Activated CD4-positive, alpha-beta memory T cell treated with anti-CD3 and anti-CD28 coated beads, Interleukin-2, amount 10 ng/mL, durations not matched to agents 7 days and 5 days (primary cell): ENCODE measurements at regions of chr11 and their contacts with region 1.

Region 1: DNA sequence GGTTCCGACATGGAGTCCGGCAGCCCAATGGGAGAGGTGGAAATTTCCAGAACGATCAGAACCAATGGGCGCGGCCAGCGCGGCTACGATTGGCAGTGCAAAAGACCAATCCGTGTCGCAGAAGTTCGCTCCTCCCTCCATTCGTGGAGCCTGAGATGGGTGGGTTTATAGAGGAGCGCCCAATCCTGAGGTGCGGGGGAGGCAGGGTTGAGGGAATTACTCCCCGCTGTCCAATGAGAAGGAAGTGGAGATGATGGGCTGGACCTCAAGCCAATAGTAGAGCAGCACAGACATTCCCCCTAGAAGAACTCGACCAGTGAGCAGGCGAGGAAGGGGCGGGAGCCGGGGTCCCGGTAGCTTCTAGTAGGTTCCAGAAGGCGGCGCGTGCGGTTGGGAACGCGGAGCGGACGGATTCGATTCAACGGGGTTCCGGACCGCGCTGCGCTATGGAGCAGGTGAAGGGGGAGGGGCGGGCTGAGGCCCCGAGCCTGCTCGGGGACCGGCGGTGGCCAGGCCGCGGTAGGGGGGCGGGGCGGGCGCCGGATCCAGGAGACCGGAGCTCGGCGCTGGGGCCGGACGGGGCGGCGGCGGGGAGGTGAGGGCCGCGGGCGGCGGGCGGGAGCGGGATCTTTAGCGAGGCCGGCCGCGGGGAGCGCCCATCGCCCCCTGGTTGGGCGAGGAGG is at the start of gene STIP1:
- DNase-seq: peak; percentile 99
- H3K4me3 Mint-ChIP-seq: no peak within 1 kb of the TSS
- H3K27ac Mint-ChIP-seq: peak within 1 kb of the TSS; percentile 99
- H3K4me1 Mint-ChIP-seq: peaks cover 56% of the 10 kb centered on the region
- H3K27me3 Mint-ChIP-seq: no peaks in the 10 kb centered on the region
- total RNA-seq, gene STIP1: 258 to 269 TPM

Region 2: DNA sequence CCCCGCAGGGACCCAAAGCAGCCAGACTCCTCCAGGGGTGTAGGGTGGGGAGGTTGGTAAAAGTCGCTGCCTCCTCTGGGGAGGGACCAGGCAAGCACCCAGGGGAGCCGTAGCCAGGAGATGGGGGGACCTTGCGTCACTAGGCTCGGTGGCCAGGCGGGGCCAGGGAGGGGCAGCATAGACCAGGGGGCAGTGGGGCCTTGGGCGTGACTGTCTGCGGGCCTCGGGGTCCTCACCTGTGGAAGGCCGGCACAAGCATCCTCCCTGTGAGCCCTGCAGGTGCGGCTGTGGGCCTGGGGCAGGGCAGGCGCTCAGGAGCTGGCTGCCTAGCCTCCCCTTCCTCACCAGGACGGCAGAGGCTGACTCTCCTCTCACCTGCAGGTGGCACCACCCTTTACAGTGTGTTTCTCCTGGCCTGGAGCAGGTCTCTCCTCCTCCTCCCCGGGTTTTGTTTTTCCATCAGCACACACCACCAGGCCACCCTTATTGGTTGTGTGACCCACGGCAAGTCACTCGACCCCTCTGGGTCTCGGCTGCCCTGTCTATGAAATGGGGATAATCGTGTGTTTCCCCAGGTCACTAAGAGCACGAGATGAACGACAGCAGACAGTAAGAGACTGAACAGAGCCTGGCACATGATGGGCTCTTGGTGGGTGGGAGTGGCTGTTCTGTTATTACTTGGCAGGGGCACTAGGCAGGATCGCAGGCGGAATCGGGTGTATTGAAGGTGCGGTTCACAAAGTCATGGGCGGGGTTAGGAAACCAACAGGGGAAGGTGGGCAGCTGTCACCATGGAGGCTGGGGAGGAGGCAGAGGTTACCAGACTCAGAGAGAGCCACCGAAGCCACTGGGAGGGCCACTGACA is 97.6 kb before region 1 on chr11:
- CTCF ChIA-PET with region 1: no interaction called
- POLR2A ChIA-PET with region 1: no interaction called
- DNase-seq: peak; percentile 17
- H3K4me3 Mint-ChIP-seq: no peak overlapping the region
- H3K27ac Mint-ChIP-seq: no peak overlapping the region
- H3K4me1 Mint-ChIP-seq: peaks cover 17% of the 10 kb centered on the region
- H3K27me3 Mint-ChIP-seq: no peaks in the 10 kb centered on the region

Region 3: GRCh38 chr11:64100360-64100759 is 85.6 kb before region 1 on chr11:
- CTCF ChIA-PET with region 1: no interaction called
- POLR2A ChIA-PET with region 1: no interaction called
- DNase-seq: no peak
- H3K4me3 Mint-ChIP-seq: no peak overlapping the region
- H3K27ac Mint-ChIP-seq: no peak overlapping the region
- H3K4me1 Mint-ChIP-seq: no peaks in the 10 kb centered on the region
- H3K27me3 Mint-ChIP-seq: no peaks in the 10 kb centered on the region

Region 4: DNA sequence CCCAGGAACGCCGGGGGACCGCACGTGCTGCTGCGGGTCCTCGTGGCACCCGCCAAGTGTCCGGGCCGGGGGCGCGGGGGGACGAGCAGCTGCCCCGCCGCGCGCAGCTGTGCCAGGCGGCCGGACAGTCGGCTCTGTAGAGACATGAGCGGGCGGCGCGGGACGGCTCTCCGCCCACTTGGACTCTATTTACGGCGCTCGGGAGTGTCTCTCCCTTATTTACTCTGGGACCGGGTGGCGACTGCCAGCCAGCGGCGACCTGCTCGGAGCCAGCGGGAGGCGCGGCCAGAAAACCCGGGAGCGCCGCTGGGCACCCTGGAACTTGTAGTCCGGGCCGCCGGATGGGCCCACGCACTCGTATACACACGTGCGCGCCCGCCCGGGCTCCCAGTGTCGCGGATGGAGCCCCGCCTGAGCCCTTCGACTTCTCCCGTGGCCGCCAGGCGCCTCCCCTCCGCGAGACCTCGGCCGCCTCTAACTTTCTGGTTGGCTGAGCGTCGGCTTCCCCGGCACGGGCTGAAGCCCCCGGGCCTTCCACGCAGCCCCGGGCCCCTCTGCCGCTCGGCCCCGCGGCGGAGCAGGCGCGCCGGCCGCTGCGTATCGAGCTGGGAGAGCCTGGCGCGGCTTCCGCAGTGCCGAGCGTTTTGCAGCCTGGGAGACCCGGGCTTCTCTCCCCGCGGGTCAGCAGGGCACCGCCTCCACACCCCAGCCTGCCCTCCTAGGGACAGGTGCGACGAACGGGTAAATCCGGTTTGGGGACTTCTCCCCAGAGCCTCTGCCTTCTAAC is 19.9 kb before region 1 on chr11 and contains the start of gene MACROD1:
- CTCF ChIA-PET with region 1: interaction called, 4 read pairs
- POLR2A ChIA-PET with region 1: interaction called, 51 read pairs
- DNase-seq: peak; percentile 84
- H3K4me3 Mint-ChIP-seq: peak within 1 kb of the TSS; percentile 84
- H3K27ac Mint-ChIP-seq: no peak within 1 kb of the TSS
- H3K4me1 Mint-ChIP-seq: peaks cover 10% of the 10 kb centered on the region
- H3K27me3 Mint-ChIP-seq: no peaks in the 10 kb centered on the region
- total RNA-seq, gene MACROD1: 8.8 to 9.1 TPM

Region 5: DNA sequence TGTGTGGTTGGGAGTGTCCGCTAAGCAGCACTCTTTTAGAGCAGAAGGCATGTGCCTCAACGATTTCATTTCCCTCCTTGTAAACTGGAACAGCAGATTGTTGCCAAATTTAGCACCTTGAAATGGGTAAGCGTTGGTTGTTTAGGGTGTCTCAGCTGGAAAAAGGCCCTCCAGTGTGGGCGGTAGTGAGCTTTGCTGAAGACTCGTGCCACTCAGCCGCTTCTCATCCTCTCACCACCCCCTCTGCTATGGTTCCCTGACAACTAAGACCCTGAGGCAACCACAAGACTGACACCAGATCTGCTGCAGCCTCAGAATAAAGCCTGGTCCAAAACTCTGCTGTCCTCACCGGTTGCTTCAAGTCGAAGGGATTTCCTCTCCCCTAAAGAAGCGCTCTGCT is 10.7 kb after region 1 on chr11:
- CTCF ChIA-PET with region 1: interaction called, 7 read pairs
- POLR2A ChIA-PET with region 1: interaction called, 36 read pairs
- DNase-seq: no peak
- H3K4me3 Mint-ChIP-seq: no peak overlapping the region
- H3K27ac Mint-ChIP-seq: peak overlapping the region; percentile 32
- H3K4me1 Mint-ChIP-seq: peaks cover 24% of the 10 kb centered on the region
- H3K27me3 Mint-ChIP-seq: no peaks in the 10 kb centered on the region

Region 6: DNA sequence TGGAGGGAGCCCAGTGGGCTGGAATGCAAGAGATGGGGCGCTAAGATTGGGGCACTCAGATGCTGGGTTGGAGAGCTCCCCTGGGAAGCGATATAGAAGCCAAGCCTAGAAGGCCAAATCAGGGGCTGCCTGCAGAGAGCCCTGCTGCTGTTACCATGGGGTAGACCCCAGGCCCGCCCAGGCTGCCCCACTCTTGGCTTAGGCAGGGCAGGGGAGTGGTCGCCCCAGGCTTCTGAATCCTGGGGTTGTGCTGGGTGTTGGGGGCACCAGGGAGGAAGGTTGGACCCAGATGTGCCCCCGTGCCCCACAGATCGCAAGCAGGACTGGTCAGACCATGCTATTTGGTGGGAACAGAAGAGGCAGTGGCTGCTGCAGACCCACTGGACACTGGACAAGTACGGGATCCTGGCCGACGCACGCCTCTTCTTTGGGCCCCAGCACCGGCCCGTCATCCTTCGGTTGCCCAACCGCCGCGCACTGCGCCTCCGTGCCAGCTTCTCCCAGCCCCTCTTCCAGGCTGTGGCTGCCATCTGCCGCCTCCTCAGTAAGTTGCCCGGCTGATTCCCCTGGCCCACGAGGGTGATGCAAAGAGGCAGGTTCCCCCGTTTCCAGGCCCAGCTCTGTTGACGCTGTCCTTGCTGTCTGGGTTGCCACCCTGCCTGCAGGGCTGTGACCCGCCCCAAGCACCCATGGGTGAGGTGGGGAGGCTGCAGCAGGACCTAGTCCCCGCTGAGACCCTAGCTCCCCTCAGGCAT is 24.5 kb after region 1 on chr11:
- CTCF ChIA-PET with region 1: interaction called, 71 read pairs
- POLR2A ChIA-PET with region 1: interaction called, 272 read pairs
- DNase-seq: no peak
- H3K4me3 Mint-ChIP-seq: no peak overlapping the region
- H3K27ac Mint-ChIP-seq: no peak overlapping the region
- H3K4me1 Mint-ChIP-seq: peaks cover 49% of the 10 kb centered on the region
- H3K27me3 Mint-ChIP-seq: no peaks in the 10 kb centered on the region

Region 7: DNA sequence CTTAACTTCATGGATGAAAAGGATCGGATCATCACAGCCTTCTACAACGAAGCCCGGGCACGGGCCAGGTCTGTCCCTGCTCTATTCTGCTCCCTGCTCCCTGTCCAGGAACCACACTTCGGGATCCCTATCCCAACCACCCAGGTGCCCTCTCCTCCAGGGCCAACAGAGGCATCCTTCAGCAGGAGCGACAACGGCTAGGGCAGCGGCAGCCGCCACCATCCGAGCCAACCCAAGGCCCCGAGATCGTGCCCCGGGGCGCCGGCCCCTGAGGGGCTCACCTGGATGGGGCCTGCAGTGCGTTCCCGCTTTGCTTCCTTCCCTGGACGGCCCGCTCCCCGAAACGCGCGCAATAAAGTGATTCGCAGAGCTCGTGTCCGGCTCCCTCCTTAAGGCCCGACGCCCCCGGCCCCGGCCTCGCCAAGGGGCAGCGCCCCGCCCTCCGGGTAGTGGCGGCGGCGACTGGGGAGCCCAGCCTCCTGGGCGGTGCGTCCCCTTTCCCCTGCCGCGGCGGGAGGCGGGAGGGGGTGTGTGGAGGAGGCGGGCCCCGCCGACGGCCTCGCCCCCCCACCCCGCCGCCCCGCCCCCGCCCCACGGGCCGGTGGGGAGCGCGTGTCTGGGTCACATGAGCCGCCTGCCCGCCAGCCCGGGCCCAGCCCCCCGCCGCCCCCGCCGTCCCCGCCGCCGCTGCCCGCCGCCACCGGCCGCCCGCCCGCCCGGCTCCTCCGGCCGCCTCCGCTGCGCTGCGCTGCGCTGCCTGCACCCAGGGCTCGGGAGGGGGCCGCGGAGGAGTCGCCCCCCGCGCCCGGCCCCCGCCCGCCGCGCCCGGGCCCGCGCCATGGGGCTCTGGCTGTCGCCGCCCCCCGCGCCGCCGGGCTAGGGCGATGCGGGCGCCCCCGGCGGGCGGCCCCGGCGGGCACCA is 48.2 kb after region 1 on chr11 and contains the start of gene VEGFB:
- CTCF ChIA-PET with region 1: no interaction called
- POLR2A ChIA-PET with region 1: interaction called, 10 read pairs
- DNase-seq: peak; percentile 79
- H3K4me3 Mint-ChIP-seq: peak within 1 kb of the TSS; percentile 83
- H3K27ac Mint-ChIP-seq: peak within 1 kb of the TSS; percentile 26
- H3K4me1 Mint-ChIP-seq: peaks cover 45% of the 10 kb centered on the region
- H3K27me3 Mint-ChIP-seq: no peaks in the 10 kb centered on the region
- total RNA-seq, gene VEGFB: 49.1 to 58.5 TPM

Region 8: GRCh38 chr11:64269380-64270234 is 83.7 kb after region 1 on chr11:
- CTCF ChIA-PET with region 1: interaction called, 4 read pairs
- POLR2A ChIA-PET with region 1: interaction called, 42 read pairs
- DNase-seq: peak; percentile 98
- H3K4me3 Mint-ChIP-seq: peak overlapping the region; percentile 85
- H3K27ac Mint-ChIP-seq: peak overlapping the region; percentile 89
- H3K4me1 Mint-ChIP-seq: peaks cover 30% of the 10 kb centered on the region
- H3K27me3 Mint-ChIP-seq: no peaks in the 10 kb centered on the region

Region 9: DNA sequence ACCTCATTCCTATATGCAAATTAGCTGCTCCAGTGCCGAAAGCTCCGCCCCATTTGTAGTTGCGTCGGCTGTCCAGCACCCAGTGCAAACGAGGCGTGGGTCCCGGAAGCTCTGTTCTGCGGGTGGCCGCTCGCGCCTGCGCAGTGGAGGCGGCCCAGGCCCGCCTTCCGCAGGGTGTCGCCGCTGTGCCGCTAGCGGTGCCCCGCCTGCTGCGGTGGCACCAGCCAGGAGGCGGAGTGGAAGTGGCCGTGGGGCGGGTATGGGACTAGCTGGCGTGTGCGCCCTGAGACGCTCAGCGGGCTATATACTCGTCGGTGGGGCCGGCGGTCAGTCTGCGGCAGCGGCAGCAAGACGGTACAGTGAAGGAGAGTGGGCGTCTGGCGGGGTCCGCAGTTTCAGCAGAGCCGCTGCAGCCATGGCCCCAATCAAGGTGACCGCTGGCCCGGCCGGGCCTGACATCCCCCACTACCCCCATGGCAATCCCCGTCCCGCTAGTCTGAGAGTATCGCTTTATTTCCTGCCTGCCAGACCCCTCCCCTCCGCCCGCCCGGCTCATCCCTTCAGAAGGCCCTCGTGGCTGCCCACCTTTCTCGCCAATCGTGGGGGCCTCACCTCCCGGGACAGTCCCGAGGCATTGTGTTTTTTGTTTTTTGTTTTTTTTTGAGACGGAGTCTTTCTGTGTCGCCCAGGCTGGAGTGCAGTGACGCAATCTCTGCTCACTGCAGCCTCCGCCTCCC is 132.2 kb after region 1 on chr11 and contains the start of gene PRDX5:
- CTCF ChIA-PET with region 1: interaction called, 11 read pairs
- POLR2A ChIA-PET with region 1: interaction called, 18 read pairs
- DNase-seq: peak; percentile 96
- H3K4me3 Mint-ChIP-seq: peak within 1 kb of the TSS; percentile 91
- H3K27ac Mint-ChIP-seq: peak within 1 kb of the TSS; percentile 96
- H3K4me1 Mint-ChIP-seq: peaks cover 53% of the 10 kb centered on the region
- H3K27me3 Mint-ChIP-seq: no peaks in the 10 kb centered on the region
- total RNA-seq, gene PRDX5: 137 to 139 TPM